GM13977 (cell line): ENCODE measurements at regions of chr1 and their contacts with region 1.

Region 1: GRCh38 chr1:58739856-58740466 is 40.1 kb upstream of the MYSM1 start:
- DNase-seq: peak; percentile 70
- CTCF ChIP-seq: peak; percentile 71

Region 2: DNA sequence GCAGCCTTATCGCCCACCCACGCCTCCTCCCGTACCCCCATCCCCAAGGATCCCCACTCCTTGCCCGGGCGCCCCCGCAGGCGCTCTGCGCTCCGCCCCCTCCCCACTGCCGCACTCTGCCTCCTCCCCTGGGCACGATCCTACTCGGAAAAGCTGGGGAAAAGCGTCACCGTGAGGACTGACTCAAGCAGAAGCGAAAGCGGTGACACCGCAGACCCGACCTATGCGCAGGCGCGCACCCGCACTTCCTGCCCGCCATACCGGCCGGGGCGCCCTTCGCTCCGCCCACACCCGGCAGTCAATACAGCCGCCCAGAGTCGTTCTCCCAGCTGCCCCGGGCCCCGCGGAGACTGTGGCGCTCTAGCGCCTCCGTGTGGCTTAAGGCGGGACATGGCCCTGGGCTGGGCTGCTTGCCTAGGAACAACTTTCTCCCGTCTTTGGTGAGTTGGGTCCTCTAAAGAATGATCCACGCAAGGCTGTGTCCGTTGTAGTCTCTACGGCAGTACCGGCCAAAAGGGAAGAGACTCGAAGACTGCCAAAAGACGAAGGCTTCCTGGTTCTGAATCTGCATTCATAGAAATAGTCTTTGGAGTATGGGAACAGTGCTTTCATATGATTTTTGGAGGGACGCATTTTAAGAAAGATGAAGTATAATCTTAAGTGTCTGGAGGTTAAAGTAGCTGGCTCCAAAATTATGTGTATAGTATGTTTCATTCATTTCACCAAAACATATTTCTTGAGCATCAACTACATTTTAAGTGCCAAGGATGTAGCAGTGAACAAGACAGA is 193.2 kb before region 1 on chr1 and contains the start of gene OMA1:
- in situ Hi-C with region 1: no loop called
- DNase-seq: peak; percentile 92
- CTCF ChIP-seq: peak; percentile 96

Region 3: GRCh38 chr1:58679463-58679862 is 60.5 kb before region 1 on chr1:
- in situ Hi-C with region 1: no loop called
- DNase-seq: no peak
- CTCF ChIP-seq: no peak

Region 4: DNA sequence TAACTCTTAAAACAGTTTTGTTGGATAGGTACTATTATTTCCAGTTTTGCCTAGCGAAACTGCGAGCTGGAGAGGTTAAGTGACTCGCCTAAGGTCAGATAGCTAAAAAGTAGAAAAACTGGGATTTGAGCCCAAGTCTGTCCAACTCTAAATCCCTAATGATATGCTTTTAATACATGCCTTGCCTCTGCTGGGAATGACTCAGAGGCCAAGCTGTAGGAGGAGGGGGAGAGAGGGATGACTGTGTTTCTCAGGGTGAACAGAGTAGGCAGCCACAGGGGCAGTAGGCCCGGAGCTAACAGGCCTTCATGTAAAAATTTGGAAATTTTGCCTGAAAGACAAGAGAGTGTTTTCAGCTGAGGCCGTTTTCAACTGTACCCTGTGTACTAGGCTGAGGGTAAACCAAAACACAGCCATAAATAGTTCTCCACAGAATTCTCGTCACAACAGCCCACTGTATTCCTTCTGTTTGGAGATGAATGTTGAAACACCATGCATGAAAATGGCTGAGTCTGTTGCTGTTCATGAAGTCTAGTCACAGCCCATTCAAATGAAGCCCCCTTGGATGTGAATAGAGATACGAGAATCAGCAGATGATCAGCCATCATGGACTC is 967.3 kb after region 1 on chr1:
- in situ Hi-C with region 1: loop called (anchors 10 kb)
- DNase-seq: no peak
- CTCF ChIP-seq: no peak